ENCODE measurements at regions of chrX and their contacts with region 1.

Region 1: DNA sequence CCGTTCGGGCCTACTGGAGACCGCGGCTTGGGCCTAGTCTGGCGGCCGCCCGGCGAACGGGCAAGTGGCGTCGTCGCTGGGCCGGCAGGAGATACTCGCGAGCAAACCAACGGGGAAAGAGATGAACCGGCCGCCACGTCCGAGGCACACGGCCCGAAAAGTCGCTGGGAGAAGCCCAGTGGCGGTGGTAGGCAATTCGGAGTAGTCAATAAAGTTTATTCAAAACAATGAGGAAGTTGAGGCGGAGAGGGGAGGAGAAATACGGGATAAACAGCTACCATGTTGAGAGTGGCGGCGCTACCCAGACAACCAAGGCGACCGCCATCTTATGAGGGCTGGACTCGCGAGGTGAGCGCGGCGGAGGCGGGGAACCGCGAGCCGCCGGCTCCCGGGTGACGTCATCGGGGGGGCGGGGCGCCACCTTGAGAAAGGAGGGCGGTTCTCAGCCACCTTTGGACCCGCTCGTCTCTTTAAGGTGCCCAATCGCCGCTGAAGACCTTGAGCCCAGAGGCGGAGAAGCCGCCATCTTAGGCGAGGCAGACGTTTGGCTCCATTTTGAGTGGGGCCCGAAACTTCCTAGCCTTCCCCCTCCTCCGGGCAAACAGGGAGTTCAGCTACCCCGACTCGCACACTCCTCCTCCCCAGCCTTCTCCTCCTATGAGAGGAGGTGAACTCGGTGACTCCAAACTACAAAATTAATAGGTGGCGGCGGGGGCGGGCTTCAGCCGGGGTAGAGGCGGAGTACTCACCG is at the start of gene PHF8:
- DNase-seq: peak; percentile 96
- ATAC-seq: peak; percentile 91
- H3K4me3 Mint-ChIP-seq: peak within 1 kb of the TSS; percentile 95
- H3K27ac Mint-ChIP-seq: peak within 1 kb of the TSS; percentile 95
- H3K4me1 Mint-ChIP-seq: peaks cover 24% of the 10 kb centered on the region
- H3K27me3 Mint-ChIP-seq: no peaks in the 10 kb centered on the region
- total RNA-seq, gene PHF8: 47.4 to 47.8 TPM

Region 2: DNA sequence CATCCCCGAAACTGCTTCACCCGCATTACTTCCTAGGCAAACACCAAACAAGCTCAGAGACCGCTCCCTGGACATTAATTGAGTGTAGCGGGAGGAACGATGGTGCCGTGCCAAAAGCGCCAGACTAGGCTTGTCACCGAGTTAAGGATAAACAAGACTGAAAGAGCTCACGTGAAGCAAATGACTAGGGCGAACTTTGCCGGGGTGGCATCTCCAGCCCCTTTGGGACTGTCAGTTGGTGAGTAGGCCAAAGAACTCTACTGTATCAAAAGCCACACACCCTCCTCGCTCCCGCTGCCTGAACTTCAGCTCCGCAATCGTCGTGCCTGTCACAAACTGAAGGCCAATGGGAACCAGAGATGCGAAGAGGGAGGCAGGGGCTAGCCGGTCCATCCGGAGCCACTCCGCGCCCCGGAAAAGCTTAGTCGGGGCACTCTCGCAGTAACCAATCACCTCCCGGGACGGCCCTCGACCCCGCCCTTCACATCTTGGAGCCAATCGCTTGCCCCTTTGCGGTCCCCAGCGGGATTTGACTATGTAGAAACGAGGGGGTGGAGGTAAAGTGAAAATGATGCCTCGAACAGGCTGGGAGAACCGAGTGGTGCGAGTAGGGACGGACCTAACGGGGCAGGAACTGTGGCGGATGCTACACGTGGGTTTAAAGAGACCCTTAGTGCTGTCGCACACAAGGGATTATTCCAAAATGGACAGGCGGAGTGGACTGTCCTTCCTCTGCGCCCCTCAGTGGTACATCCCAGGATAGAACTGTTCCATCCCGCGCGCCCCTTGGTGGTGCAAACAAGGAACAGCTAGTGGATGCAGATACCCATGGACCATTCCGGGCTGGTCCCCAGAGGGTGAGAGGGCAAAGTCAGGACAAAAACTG is 1048.9 kb before region 1 on chrX:
- CTCF ChIA-PET with region 1: no interaction called
- POLR2A ChIA-PET with region 1: no interaction called
- intact Hi-C with region 1: loop called in 1 of 2 experiments (anchors 5 kb)
- DNase-seq: peak; percentile 94
- ATAC-seq: peak; percentile 97
- H3K4me3 Mint-ChIP-seq: peak overlapping the region; percentile 87
- H3K27ac Mint-ChIP-seq: peak overlapping the region; percentile 99
- H3K4me1 Mint-ChIP-seq: peaks cover 27% of the 10 kb centered on the region
- H3K27me3 Mint-ChIP-seq: no peaks in the 10 kb centered on the region

Region 3: DNA sequence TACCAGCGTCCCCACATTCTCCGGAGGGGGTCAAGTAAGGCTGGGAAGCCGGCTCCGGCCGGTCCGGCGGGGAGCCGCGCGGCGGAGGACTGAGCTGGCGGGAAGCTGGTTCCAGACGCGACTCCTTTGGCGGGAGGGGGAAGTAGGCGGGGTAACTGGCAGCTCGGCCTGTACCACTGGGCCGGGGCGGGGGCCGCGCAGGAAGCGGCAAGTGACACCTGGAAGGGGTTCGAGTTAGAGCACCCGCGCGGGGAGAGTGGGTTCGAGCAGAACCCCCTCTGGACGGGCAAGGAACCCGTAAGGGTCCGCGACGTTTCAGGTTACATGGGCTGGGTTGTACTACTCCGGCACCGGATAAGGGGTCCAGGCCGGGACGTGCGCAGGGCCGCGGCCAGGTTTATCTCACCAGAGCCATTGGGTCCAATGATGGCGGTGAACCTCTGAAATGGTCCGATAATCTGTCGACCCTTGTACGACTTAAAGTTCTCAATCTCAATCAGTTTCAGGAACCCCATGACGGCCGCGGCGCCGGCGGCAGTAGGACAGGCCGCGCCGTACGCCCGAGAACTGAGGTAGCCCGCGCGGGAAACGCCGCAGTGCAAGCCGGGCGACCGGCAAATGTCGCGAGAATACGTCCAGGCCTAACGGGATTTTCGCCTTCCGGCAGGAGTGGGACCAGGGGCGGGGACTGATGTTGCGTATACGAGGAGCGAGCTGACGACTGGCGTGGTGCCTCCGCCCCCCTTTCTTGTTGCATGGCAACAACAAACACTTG is 622.0 kb before region 1 on chrX and contains the start of gene SMC1A:
- CTCF ChIA-PET with region 1: no interaction called
- POLR2A ChIA-PET with region 1: no interaction called
- intact Hi-C with region 1: loop called (anchors 1 to 5 kb)
- DNase-seq: peak; percentile 96
- ATAC-seq: peak; percentile 91
- H3K4me3 Mint-ChIP-seq: peak within 1 kb of the TSS; percentile 94
- H3K27ac Mint-ChIP-seq: peak within 1 kb of the TSS; percentile 97
- H3K4me1 Mint-ChIP-seq: peaks cover 27% of the 10 kb centered on the region
- H3K27me3 Mint-ChIP-seq: no peaks in the 10 kb centered on the region
- total RNA-seq, gene SMC1A: 155 to 190 TPM

Region 4: DNA sequence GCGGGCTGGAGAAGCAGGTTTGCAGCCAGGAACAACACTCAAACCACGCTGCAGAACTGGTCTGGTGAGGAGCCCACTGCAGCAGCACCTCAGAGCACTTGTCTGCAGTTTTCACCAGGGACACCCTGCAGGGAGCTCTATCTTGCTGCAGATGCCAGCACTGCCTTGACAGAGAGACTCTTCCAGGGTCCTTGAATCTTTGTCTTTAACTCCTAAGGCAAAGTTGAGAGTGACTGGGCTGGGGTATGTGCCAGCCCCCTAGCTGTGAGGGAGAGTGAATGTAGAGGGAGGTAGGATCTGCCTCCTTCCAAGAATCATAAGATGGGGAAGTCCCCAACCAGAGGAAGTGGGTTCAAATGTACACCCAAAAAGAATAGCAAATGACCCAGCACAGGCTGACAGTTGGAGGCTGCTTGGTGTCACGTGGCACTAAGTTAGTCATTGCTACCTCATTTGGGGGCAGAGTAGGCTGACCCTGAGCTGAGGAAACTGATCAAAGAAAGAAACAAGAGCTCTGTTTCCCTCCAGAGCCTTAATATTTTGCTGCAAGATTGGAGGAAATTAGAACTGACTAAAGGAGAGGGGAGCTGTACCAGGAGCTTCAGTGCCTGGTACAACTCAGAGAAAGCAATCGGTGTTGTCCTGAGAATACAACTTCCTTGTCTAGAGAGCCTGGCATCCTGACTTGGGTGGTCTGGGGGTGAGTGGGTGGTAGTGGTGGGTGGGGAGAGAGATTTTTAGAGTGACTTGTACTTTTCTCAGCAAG is 329.5 kb before region 1 on chrX:
- CTCF ChIA-PET with region 1: no interaction called
- POLR2A ChIA-PET with region 1: no interaction called
- intact Hi-C with region 1: loop called in 1 of 2 experiments (anchors 10 kb)
- DNase-seq: peak; percentile 77
- ATAC-seq: peak; percentile 74
- H3K4me3 Mint-ChIP-seq: peak overlapping the region; percentile 86
- H3K27ac Mint-ChIP-seq: peak overlapping the region; percentile 96
- H3K4me1 Mint-ChIP-seq: peaks cover 37% of the 10 kb centered on the region
- H3K27me3 Mint-ChIP-seq: no peaks in the 10 kb centered on the region

Region 5: GRCh38 chrX:54529552-54530357 is 485.5 kb after region 1 on chrX and contains the start of gene GNL3L:
- CTCF ChIA-PET with region 1: no interaction called
- POLR2A ChIA-PET with region 1: interaction called, 5 read pairs
- intact Hi-C with region 1: loop called in 1 of 2 experiments (anchors 1 kb)
- DNase-seq: peak; percentile 89
- ATAC-seq: peak; percentile 88
- H3K4me3 Mint-ChIP-seq: peak within 1 kb of the TSS; percentile 90
- H3K27ac Mint-ChIP-seq: peak within 1 kb of the TSS; percentile 90
- H3K4me1 Mint-ChIP-seq: peaks cover 26% of the 10 kb centered on the region
- H3K27me3 Mint-ChIP-seq: no peaks in the 10 kb centered on the region
- total RNA-seq, gene GNL3L: 62.5 to 62.8 TPM

Region 6: DNA sequence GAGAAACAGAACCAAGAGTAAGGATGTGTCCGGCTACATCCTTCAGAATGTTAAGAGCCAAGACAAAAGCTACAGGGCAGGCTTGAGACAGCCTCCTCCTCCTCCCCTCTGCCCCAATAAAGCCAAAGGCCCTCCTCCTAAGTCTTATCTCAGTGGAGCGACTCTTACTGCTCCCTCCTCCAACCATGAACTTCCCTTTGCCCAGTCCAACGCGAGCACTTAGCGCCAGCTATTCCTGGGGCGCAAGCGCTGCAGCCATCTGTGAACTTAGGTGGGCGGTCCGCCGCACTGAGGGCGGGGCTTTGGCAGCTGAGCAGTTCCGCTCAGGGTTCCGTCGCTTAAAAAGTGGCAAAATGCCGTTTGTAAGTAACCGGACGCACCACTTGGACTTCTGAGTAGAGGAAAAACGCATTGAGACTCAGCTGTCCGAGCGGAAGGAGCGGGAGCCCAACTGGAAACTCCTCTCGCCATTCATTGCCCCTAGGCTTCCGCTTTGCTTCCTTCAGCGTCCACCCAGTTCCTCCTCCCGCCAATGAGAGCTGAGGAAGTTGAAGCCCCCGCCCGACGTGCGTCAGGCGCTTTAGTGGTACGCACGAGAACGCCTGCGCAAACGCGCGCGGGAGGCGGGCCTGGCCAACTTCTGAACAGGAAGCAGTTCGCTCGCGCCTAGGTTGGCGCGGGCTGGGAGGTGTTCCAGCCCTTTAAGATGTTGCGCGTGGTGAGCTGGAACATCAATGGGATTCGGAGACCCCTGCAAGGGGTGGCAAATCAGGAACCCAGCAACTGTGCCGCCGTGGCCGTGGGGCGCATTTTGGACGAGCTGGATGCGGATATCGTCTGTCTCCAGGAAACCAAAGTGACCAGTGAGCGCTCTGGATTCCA is 955.7 kb after region 1 on chrX and contains the start of gene APEX2:
- CTCF ChIA-PET with region 1: no interaction called
- POLR2A ChIA-PET with region 1: interaction called, 3 read pairs
- intact Hi-C with region 1: loop called in 1 of 2 experiments (anchors 2 kb)
- DNase-seq: peak; percentile 92
- ATAC-seq: peak; percentile 96
- H3K4me3 Mint-ChIP-seq: peak within 1 kb of the TSS; percentile 94
- H3K27ac Mint-ChIP-seq: peak within 1 kb of the TSS; percentile 94
- H3K4me1 Mint-ChIP-seq: peaks cover 21% of the 10 kb centered on the region
- H3K27me3 Mint-ChIP-seq: no peaks in the 10 kb centered on the region
- total RNA-seq, gene APEX2: 37.7 to 41.4 TPM

Measured in activated CD4-positive, alpha-beta T cell treated with anti-CD3 and anti-CD28 coated beads for 36 hours (primary cell).